Activated T-helper 1 cell treated with anti-CD3 and anti-CD28 coated beads, Interleukin-12 subunit alpha, Interleukin-12 subunit beta, Interleukin-2, Interleukin-4 antibody, amounts not matched to agents 30 ng/mL and 10 ng/mL and 1 ng/mL, durations not matched to agents 14 hours and 24 hours and 36 hours (primary cell): ENCODE measurements at regions of chr14 and their contacts with region 1.

Region 1: DNA sequence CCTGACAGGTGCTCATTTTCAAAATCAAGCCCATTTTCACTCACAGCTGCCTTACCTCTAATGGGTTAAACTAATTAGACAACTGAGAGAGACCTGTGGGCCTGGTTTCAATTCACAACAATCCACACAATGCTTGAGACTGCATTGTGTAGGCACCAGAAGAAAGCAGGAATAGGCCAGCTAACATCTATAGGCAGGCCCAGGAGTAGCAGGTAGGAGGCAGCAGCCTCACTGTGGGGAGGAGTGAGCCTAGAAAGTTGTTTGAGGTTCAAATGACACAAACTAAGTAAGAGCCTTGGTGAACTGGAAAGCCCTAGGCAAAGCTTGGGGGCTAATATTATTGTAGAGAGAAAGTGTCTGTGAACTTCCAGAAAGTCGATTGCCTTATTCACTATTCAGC is 289.5 kb upstream of the CCDC196 start:
- DNase-seq: no peak
- H3K4me3 Mint-ChIP-seq: no peak overlapping the region
- H3K27ac Mint-ChIP-seq: no peak overlapping the region
- H3K4me1 Mint-ChIP-seq: no peaks in the 10 kb centered on the region
- H3K27me3 Mint-ChIP-seq: peaks cover 2% of the 10 kb centered on the region

Region 2: DNA sequence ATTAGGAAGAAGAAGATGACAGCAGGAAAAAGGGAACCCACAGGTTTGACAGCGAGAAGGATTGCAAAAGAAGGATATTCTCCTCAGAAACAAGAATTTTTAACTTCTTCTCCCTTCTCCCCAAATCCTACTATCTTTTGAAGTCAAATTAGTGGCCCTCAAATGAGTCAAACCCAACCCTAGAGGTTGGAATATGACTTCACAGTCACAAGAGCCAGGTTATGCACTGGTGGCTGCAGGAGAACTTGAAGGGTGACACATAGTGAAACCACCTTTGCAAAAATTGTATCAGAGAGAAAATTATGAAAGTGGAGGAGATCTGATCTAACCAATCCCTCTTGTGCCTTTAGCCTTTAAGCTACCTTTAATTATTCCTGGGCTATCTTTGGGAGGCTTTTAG is 96.7 kb before region 1 on chr14:
- intact Hi-C with region 1: loop called (anchors 1 kb)
- DNase-seq: no peak
- H3K4me3 Mint-ChIP-seq: no peak overlapping the region
- H3K27ac Mint-ChIP-seq: no peak overlapping the region
- H3K4me1 Mint-ChIP-seq: peaks cover 7% of the 10 kb centered on the region
- H3K27me3 Mint-ChIP-seq: peaks cover 16% of the 10 kb centered on the region

Region 3: DNA sequence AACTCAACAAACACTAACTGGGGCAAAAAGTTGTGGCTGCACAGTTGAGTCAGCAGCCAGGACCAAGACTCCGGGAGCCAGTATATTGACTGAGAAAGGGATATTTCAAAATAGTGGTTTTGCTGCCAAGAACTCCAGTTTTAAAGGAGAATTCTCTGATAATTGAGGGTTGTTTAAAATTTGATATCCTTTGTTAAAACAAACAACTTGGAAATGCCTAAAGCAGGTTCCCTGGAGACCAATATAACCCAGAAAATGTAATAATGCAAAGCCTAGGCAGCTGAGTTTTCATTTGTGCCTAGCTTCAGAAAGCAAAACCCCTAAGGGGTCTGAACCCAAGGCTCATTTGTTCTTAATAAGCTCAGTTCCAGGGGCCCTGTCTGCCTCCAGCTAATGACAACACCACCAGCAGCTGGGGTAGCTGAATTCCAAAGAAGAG is 22.2 kb before region 1 on chr14:
- intact Hi-C with region 1: no loop called
- DNase-seq: no peak
- H3K4me3 Mint-ChIP-seq: no peak overlapping the region
- H3K27ac Mint-ChIP-seq: no peak overlapping the region
- H3K4me1 Mint-ChIP-seq: no peaks in the 10 kb centered on the region
- H3K27me3 Mint-ChIP-seq: peaks cover 15% of the 10 kb centered on the region